ENCODE measurements at regions of chr2 and their contacts with region 1.

Region 1: DNA sequence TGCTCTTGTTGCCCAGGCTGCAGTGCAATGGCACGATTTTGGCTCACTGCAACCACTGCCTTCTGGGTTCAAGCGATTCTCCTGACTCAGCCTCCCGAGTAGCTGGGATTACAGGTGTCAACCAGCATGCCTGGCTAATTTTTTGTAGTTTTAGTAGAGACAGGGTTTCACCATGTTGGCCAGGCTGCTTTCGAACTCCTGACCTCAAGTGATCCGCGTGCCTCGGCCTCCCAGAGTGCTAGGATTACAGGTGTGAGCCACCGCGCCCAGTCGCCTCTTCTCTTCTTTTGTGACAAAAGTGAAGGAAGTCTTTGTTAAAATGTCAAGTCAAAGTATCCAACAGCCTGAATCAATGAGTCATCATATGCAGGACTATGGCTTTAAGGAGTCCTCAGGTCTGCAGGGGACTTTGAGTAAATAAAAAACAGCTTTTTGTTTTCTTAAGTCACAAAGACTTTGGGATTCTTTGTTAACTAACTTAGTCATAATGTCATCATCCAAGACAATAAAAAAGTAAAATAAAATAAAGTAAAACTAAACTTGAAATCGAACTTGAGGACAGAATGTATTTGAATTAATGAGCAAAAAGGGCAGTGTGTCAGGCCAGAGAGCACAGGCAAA is 1153.2 kb downstream of the SUCLG1 start:
- DNase-seq: no peak

Region 2: DNA sequence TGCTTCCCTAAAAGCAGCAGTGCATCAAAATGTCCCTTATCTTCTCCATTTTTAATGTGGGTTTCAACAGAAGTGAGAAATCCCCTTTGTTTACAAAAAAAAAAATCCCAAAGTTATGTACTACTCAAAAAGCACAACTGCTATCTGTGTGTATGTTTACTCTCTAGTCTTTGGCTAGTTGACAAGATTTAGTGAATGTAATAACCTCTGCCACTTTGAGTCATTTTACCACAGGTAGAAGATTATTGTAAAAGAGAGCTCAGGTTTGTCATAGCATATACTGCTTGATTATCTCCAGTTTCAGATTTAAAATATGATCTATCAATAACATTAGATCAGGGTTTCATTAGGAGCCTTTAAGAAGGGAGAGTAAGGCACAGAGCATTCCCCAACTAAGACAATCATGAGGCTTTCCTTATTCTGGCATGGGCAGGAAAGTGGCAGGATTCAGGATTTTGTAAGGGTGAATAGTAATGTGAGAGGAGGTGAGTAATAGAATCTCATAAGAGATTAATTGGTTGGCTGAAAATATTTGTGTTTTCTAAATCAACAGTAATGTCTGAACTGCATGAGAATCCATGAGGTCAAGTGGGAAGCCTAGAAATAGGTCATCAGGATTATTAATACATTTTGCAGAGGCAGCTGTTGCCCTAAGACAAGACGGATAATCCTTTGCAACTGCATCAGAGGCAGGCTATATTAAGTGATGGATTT is 1221.0 kb before region 1 on chr2:
- intact Hi-C with region 1: loop called in 1 of 2 experiments (anchors 5 kb)
- DNase-seq: no peak

Measured in posterior vena cava (tissue), 2 donors.